Activated B cell treated with CpG ODN at 0.5 μM for 24 hours (primary cell): ENCODE measurements at regions of chr10 and their contacts with region 1.

Region 1: GRCh38 chr10:117174439-117175214 is 22.7 kb upstream of the KCNK18 start:
- DNase-seq: peak; percentile 56
- ATAC-seq: peak; percentile 83
- H3K4me3 Mint-ChIP-seq: peak overlapping the region; percentile 85
- H3K27ac Mint-ChIP-seq: no peak overlapping the region
- H3K4me1 Mint-ChIP-seq: peaks cover 18% of the 10 kb centered on the region
- H3K27me3 Mint-ChIP-seq: peaks cover 38% of the 10 kb centered on the region
- CTCF ChIP-seq: no peak

Region 2: DNA sequence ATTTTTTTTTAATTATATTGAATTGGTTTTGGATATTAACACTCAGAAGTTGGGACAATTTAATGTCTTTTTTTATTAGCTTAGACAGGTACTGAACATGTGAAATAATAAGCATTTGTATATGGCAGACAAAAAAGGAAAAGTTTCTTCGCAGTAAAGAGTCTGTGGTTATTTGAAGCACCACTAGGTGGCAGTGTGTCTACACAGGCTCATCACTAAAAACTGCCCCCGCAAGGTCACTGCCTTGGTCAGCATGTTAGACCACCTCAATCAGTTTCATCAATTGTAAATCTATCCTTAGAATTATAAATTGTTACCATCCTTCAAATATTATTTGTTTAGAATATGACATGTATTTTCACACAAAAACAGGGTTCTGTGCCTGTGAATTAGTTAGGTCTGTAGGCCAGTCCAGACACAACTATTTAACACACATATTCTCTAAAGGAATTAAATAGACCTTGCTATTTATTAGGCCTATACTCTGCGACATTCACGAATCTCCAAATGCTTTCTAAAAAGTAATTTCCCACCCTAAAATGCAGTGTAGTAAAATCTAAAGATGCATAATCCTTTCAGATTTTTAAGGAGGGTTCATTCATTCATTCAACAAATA is 730.0 kb before region 1 on chr10:
- CTCF ChIA-PET with region 1: no interaction called
- POLR2A ChIA-PET with region 1: no interaction called
- intact Hi-C with region 1: loop called (anchors 5 kb)
- DNase-seq: no peak
- ATAC-seq: no peak
- H3K4me3 Mint-ChIP-seq: no peak overlapping the region
- H3K27ac Mint-ChIP-seq: no peak overlapping the region
- H3K4me1 Mint-ChIP-seq: no peaks in the 10 kb centered on the region
- H3K27me3 Mint-ChIP-seq: no peaks in the 10 kb centered on the region
- CTCF ChIP-seq: peak; percentile 42

Region 3: GRCh38 chr10:116742367-116743265 is 432.0 kb before region 1 on chr10 and contains the start of gene HSPA12A:
- CTCF ChIA-PET with region 1: no interaction called
- POLR2A ChIA-PET with region 1: no interaction called
- intact Hi-C with region 1: loop called (anchors 2 kb)
- DNase-seq: peak; percentile 44
- ATAC-seq: peak; percentile 87
- H3K4me3 Mint-ChIP-seq: peak within 1 kb of the TSS; percentile 64
- H3K27ac Mint-ChIP-seq: no peak within 1 kb of the TSS
- H3K4me1 Mint-ChIP-seq: peaks cover 5% of the 10 kb centered on the region
- H3K27me3 Mint-ChIP-seq: peaks cover 49% of the 10 kb centered on the region
- CTCF ChIP-seq: no peak
- total RNA-seq, gene HSPA12A: 4.0 and 5.1 TPM in 2 replicates

Region 4: DNA sequence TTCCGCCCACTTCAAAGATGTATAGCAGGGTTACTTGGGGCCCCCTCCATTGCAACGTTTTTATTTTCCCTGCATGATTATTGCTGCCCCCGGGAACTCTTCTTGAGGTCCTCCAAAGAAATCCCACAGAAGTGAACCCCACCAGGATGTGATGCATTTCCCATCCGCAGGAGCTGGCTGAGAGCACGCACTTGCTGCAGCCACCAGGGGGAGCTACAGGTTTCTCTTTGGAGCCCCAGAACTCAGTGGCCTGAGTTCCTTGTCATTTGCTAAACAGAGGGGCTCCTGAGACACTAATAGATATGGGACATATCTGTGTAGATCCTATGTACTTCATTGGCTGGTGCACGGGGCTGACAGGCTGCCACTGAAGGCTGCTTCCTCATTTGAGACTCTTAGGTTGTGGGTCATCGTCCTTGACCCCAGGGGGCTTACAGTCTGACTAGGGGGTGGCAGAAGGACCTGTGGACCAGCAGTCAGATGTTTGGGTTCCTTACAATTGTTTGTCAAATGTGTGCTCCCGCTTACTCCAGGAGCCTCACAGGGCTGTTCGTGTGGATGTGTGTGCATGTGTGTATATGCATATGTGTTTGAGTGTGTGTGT is 377.6 kb before region 1 on chr10:
- CTCF ChIA-PET with region 1: interaction called, 89 read pairs
- POLR2A ChIA-PET with region 1: no interaction called
- intact Hi-C with region 1: loop called (anchors 1 kb)
- DNase-seq: peak; percentile 31
- ATAC-seq: no peak
- H3K4me3 Mint-ChIP-seq: no peak overlapping the region
- H3K27ac Mint-ChIP-seq: no peak overlapping the region
- H3K4me1 Mint-ChIP-seq: no peaks in the 10 kb centered on the region
- H3K27me3 Mint-ChIP-seq: peaks cover 6% of the 10 kb centered on the region
- CTCF ChIP-seq: no peak

Region 5: DNA sequence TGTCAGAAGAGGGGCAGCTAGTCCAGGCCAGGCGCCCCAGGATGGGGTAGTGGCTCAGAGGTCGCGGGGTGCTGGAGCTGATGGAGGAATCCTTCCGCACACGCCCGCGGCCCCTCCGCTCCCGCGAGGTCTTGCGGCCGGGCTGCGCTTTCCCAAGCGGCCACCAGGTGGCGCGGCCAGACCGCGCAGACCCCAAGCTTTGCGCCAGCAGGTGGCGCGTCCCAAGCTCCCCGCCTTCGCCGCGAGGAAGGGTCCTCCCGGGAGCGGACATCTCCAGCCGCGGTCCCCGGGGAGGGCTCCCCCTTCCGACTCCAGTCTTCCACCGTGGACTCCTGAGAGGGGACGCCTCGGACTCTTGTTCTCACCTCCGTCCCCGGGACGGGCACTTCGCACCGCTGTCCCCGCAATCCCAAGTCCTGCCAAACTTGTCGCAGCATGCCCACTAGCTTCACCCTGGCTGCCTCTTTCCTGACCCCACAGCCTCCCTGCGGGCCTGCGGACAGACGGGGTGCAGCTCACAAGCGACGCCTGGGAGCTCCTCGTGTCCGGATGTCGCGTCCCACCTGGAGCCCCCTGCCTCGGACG is 42.1 kb after region 1 on chr10:
- CTCF ChIA-PET with region 1: interaction called, 13 read pairs
- POLR2A ChIA-PET with region 1: no interaction called
- intact Hi-C with region 1: no loop called
- DNase-seq: peak; percentile 72
- ATAC-seq: peak; percentile 90
- H3K4me3 Mint-ChIP-seq: peak overlapping the region; percentile 66
- H3K27ac Mint-ChIP-seq: no peak overlapping the region
- H3K4me1 Mint-ChIP-seq: peaks cover 5% of the 10 kb centered on the region
- H3K27me3 Mint-ChIP-seq: peaks cover 23% of the 10 kb centered on the region
- CTCF ChIP-seq: peak; percentile 96